Esophagus muscularis mucosa (tissue), 4 donors: ENCODE measurements at regions of chr3 and their contacts with region 1.

Region 1: GRCh38 chr3:62188681-62189383 is 184.5 kb downstream of the FEZF2 start:
- DNase-seq: no peak
- H3K4me3 ChIP-seq: peak overlapping the region in 2 of 4 donors; percentile 14 to 29
- H3K27ac ChIP-seq: no peak overlapping the region
- H3K4me1 ChIP-seq: peaks cover 17 to 22% (median 19%) of the 10 kb centered on the region in 4 donors
- H3K27me3 ChIP-seq: no peaks in the 10 kb centered on the region
- CTCF ChIP-seq: peak; percentile 76 to 84 (median 80)
- EP300 ChIP-seq: no peak
- POLR2A ChIP-seq: no peak

Region 2: GRCh38 chr3:61858056-61858455 is 330.8 kb before region 1 on chr3:
- intact Hi-C with region 1: loop called (anchors 5 kb)
- DNase-seq: no peak
- H3K4me3 ChIP-seq: no peak overlapping the region
- H3K27ac ChIP-seq: no peak overlapping the region
- H3K4me1 ChIP-seq: peaks cover 7 to 36% (median 16%) of the 10 kb centered on the region in 4 donors
- H3K27me3 ChIP-seq: no peaks in the 10 kb centered on the region
- CTCF ChIP-seq: peak; percentile 52 to 62 (median 54)
- EP300 ChIP-seq: no peak
- POLR2A ChIP-seq: no peak

Region 3: GRCh38 chr3:61956236-61956635 is 232.6 kb before region 1 on chr3:
- intact Hi-C with region 1: loop called (anchors 10 kb)
- DNase-seq: no peak
- H3K4me3 ChIP-seq: no peak overlapping the region
- H3K27ac ChIP-seq: peak overlapping the region in 1 of 4 donors; percentile 1
- H3K4me1 ChIP-seq: peaks cover 2 to 17% (median 12%) of the 10 kb centered on the region in 4 donors
- H3K27me3 ChIP-seq: no peaks in the 10 kb centered on the region
- CTCF ChIP-seq: no peak
- EP300 ChIP-seq: no peak
- POLR2A ChIP-seq: no peak

Region 4: GRCh38 chr3:62392626-62393292 is 203.9 kb after region 1 on chr3:
- intact Hi-C with region 1: no loop called
- DNase-seq: no peak
- H3K4me3 ChIP-seq: no peak overlapping the region
- H3K27ac ChIP-seq: no peak overlapping the region
- H3K4me1 ChIP-seq: no peaks in the 10 kb centered on the region
- H3K27me3 ChIP-seq: no peaks in the 10 kb centered on the region
- CTCF ChIP-seq: no peak
- EP300 ChIP-seq: no peak
- POLR2A ChIP-seq: no peak